K562 (cell line): ENCODE measurements at regions of chr2 and their contacts with region 1.

Region 1: DNA sequence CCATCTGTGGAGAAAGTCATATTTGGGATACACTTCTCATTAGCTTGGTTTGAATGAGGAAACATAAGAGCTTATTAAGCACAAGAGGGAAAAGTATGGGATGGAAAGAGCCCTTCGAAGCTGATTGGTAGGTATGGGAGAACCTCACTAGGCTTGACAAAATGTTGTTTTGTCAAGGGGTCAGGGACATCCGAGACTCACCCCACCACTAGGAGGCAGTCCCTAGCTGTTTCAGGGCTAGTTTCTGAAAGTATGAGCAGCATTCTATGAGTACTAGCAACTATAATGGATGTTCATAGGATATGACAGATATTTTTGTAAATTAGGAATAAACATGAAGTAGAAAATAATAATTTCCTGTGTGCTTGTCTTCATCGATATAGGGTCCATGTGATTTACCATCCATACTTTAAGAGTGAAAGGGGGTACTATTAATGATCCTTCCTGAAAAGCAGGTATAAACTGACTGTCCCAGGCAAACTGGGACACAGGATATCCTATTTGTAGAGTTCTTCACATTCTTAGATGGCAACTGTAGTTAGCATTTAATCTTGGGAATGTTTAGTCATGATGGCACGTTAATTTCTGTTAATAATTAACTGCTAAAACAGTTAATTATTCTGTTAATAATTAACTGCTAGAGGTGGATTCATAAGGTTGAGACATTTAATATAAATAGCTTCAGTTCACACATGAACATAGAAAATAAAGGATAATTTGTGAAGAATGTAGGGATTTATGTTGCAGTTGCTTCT is 28.4 kb downstream of the OTX1 start:
- DNase-seq: peak; percentile 24 to 47 (median 34)
- ATAC-seq: peak; percentile 88
- H3K4me3 ChIP-seq: no peak overlapping the region
- H3K27ac ChIP-seq: no peak overlapping the region
- H3K4me1 ChIP-seq: no peaks in the 10 kb centered on the region
- H3K27me3 ChIP-seq: no peaks in the 10 kb centered on the region
- CTCF ChIP-seq: peak; percentile 51 to 68 (median 67)
- EP300 ChIP-seq: no peak
- POLR2A ChIP-seq: no peak
- RAD21 ChIP-seq: peak; percentile 38 to 79

Region 2: DNA sequence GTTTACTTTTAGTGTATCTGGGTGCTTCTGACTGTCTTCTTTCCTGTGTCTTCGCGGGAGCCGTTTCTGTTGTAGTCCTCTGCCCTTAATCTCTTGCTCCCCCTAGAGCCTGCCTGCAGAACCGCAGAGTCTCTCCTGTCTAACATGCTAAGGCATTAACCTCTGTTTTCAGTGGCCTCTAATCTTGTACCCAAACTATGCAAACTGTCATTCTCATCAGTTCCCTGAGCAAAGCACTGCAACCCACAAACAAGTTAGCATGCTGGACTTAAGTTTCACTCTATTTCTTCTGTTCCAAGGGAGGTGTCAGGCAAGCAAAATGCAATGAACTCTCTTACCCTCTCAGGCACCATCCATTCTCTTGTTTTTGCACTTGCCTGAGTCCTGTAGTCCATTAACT is 110.0 kb after region 1 on chr2:
- CTCF ChIA-PET with region 1: no interaction called
- POLR2A ChIA-PET with region 1: no interaction called
- in situ Hi-C with region 1: no loop called
- intact Hi-C with region 1: loop called (anchors 1 kb)
- DNase-seq: peak; percentile 20 to 65 (median 44)
- ATAC-seq: peak; percentile 98
- H3K4me3 ChIP-seq: no peak overlapping the region
- H3K27ac ChIP-seq: no peak overlapping the region
- H3K4me1 ChIP-seq: no peaks in the 10 kb centered on the region
- H3K27me3 ChIP-seq: peaks cover 0 to 4% of the 10 kb centered on the region in 2 experiments; a peak in 1 of 5 replicates
- CTCF ChIP-seq: peak; percentile 78 to 84 (median 81)
- EP300 ChIP-seq: no peak
- POLR2A ChIP-seq: no peak
- RAD21 ChIP-seq: peak; percentile 13 to 77; a peak in 2 of 4 replicates

Region 3: GRCh38 chr2:63424329-63425078 is 345.5 kb after region 1 on chr2:
- CTCF ChIA-PET with region 1: no interaction called
- POLR2A ChIA-PET with region 1: no interaction called
- in situ Hi-C with region 1: no loop called
- intact Hi-C with region 1: loop called (anchors 10 kb)
- DNase-seq: peak; percentile 52 to 67 (median 55)
- ATAC-seq: peak; percentile 94
- H3K4me3 ChIP-seq: no peak overlapping the region
- H3K27ac ChIP-seq: no peak overlapping the region
- H3K4me1 ChIP-seq: peaks cover 2 to 5% of the 10 kb centered on the region in 2 experiments; a peak in 1 of 5 replicates
- H3K27me3 ChIP-seq: no peaks in the 10 kb centered on the region
- CTCF ChIP-seq: peak; percentile 61 to 83 (median 80)
- EP300 ChIP-seq: no peak
- POLR2A ChIP-seq: no peak
- RAD21 ChIP-seq: peak; percentile 43 to 78

Region 4: DNA sequence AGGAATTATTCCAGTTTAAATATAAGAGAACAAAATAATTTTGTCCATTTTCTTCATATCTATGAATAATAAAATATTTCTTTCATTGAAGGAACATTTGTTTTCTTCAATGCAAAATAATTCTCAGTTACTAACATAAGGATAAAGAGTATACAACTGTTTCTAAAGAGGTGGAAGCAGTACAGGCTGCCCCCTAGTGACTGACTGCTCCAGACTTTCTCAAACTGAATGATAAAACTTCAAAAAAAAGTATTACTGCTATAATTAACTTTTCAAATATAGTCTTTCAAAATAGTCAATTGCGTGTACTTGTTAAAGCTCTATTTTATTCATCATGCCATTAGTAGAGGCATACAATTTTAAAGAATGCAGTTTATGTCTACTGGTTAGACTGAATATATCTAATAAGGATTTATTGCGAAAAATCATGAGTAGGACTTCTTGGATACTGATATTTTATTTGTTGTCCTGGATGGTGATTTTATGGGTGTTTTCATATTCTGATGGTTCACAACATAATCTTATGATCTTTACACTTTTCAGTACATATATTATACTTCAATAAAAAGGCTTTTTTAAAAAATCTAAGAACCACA is 409.2 kb after region 1 on chr2:
- CTCF ChIA-PET with region 1: no interaction called
- POLR2A ChIA-PET with region 1: no interaction called
- in situ Hi-C with region 1: no loop called
- intact Hi-C with region 1: loop called (anchors 1 kb)
- DNase-seq: peak; percentile 8 to 35 (median 12)
- ATAC-seq: peak; percentile 52; the same call in 1 of the 3 replicates
- H3K4me3 ChIP-seq: no peak overlapping the region
- H3K27ac ChIP-seq: no peak overlapping the region
- H3K4me1 ChIP-seq: no peaks in the 10 kb centered on the region
- H3K27me3 ChIP-seq: no peaks in the 10 kb centered on the region
- CTCF ChIP-seq: peak; percentile 16 to 66 (median 46); a peak in 4 of 6 replicates
- EP300 ChIP-seq: no peak
- POLR2A ChIP-seq: no peak
- RAD21 ChIP-seq: peak; percentile 56 to 67

Region 5: DNA sequence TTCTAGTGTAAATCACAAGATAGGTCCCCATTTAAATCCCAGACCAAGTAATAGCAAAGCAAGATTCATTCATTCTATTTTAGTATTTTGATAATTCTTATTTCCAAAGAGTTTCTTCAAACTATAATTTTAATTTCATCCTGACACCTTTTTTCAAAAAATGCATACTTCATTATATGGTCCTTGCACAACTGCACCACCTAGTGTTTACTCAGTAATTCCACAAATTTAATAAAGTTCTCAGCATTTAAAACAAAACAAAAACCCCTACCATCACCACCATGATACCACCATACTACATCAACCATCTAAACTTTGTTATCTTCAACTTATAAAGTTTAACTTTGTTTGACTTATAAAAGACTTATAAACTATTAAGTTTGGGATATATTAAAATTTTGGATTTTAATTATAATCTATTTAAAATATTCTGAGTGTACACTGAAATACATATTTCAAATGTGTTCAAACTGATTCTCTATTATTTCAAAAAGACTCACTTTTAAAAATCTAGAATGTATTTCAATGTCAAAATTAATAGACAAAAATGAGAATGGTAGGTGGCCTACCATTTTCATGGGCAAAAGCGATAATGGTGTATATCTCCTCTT is 465.1 kb after region 1 on chr2:
- CTCF ChIA-PET with region 1: no interaction called
- POLR2A ChIA-PET with region 1: no interaction called
- in situ Hi-C with region 1: no loop called
- intact Hi-C with region 1: loop called (anchors 10 kb)
- DNase-seq: peak in 2 of 4 experiments; percentile 14 to 21
- ATAC-seq: peak; percentile 44; the same call in 1 of the 3 replicates
- H3K4me3 ChIP-seq: no peak overlapping the region
- H3K27ac ChIP-seq: no peak overlapping the region
- H3K4me1 ChIP-seq: no peaks in the 10 kb centered on the region
- H3K27me3 ChIP-seq: no peaks in the 10 kb centered on the region
- CTCF ChIP-seq: peak in 2 of 3 experiments; percentile 26 to 66; a peak in 3 of 6 replicates
- EP300 ChIP-seq: no peak
- POLR2A ChIP-seq: no peak
- RAD21 ChIP-seq: peak; percentile 29 to 62